IMR-90 (cell line): ENCODE measurements at regions of chr11 and their contacts with region 1.

Region 1: GRCh38 chr11:77438487-77438886 is 35.4 kb downstream of the PAK1 start:
- DNase-seq: no peak
- ATAC-seq: no peak
- H3K4me3 ChIP-seq: no peak overlapping the region
- H3K27ac ChIP-seq: no peak overlapping the region
- H3K4me1 ChIP-seq: no peaks in the 10 kb centered on the region
- H3K27me3 ChIP-seq: peaks cover 32% of the 10 kb centered on the region
- CTCF ChIP-seq: no peak
- POLR2A ChIP-seq: no peak
- RAD21 ChIP-seq: no peak

Region 2: DNA sequence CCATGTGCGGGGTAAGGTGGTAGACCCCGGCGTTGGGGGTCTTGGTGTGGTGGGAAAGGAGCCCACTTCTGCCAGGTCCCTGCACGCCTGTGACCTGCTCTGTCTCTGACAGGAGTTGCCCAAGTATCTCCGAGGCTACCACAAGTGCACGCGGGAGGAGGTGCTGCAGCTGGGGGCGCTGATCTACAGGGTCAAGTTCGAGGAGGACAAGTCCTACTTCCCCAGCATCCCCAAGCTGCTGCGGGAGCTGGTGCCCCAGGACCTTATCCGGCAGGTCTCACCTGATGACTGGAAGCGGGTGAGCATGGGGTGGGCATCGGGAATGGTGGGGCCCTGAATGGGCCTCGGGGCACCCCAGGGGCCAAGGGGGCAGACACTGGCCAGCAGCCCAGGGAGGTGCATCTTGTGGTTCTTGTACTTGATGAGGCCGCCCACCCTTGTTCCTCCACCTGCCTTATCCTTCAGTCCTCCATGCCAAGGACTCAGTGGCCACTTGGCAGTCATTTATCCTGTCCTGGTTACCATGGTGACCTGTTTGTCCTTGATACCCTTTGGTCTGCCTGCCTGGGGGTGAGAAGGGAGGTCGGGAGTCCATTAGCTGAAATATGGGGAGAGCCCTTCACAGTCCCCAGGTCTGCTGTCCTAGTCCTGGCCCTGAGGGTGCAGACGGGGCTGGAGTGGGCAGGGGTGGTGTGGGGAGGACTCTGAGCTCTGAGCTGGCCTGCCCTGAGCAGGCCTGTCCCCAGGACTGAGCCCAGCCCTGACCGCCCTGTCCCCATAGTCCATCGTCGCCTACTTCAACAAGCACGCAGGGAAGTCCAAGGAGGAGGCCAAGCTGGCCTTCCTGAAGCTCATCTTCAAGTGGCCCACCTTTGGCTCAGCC is 227.2 kb before region 1 on chr11:
- CTCF ChIA-PET with region 1: no interaction called
- POLR2A ChIA-PET with region 1: no interaction called
- dilution Hi-C with region 1: no loop called
- in situ Hi-C with region 1: no loop called
- intact Hi-C with region 1: no loop called
- DNase-seq: no peak
- ATAC-seq: no peak
- H3K4me3 ChIP-seq: no peak overlapping the region
- H3K27ac ChIP-seq: no peak overlapping the region
- H3K4me1 ChIP-seq: no peaks in the 10 kb centered on the region
- H3K27me3 ChIP-seq: peaks cover 18% of the 10 kb centered on the region
- CTCF ChIP-seq: no peak
- POLR2A ChIP-seq: no peak
- RAD21 ChIP-seq: no peak

Region 3: GRCh38 chr11:77503015-77503414 is 64.5 kb after region 1 on chr11:
- CTCF ChIA-PET with region 1: no interaction called
- POLR2A ChIA-PET with region 1: no interaction called
- dilution Hi-C with region 1: no loop called
- in situ Hi-C with region 1: no loop called
- intact Hi-C with region 1: loop called (anchors 5 kb)
- DNase-seq: peak; percentile 19
- ATAC-seq: 0 out of 2 replicates have a peak, but pooled peaks have one; percentile 17
- H3K4me3 ChIP-seq: no peak overlapping the region
- H3K27ac ChIP-seq: no peak overlapping the region
- H3K4me1 ChIP-seq: no peaks in the 10 kb centered on the region
- H3K27me3 ChIP-seq: peaks cover 17% of the 10 kb centered on the region
- CTCF ChIP-seq: no peak
- POLR2A ChIP-seq: no peak
- RAD21 ChIP-seq: no peak